ENCODE measurements at regions of chr1 and their contacts with region 1.

Region 1: DNA sequence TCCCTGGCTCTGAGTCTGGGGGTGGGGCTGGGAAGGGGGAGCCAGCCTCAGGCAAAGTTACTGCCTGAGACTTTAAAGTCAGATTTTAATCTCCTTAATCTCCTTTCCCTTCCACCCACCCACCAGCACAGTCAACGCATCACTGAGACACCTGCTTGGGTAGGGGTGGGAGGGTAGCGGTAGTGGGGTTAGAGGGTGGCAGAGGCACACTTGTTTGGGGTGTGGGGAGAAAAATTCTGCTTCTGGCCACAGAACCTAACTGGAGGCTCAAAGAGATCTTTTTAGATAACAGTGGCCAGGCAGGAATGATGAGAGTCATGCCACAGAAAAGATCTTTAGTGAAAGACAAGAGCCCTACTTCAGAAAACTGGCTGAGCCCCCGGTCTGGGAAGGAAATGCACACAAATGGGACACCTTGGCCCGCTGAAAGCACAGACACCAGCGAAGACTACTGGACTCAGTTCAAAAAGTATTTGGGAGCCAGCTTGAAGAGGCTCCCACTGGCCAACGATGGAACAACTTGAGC is 44.1 kb downstream of the CD247 start:
- DNase-seq: no peak
- H3K4me3 ChIP-seq: no peak overlapping the region
- H3K27ac ChIP-seq: no peak overlapping the region
- H3K4me1 ChIP-seq: no peaks in the 10 kb centered on the region
- H3K27me3 ChIP-seq: no peaks in the 10 kb centered on the region
- CTCF ChIP-seq: no peak
- EP300 ChIP-seq: no peak
- POLR2A ChIP-seq: no peak

Region 2: GRCh38 chr1:167387251-167387910 is 86.9 kb before region 1 on chr1:
- intact Hi-C with region 1: no loop called
- DNase-seq: no peak
- H3K4me3 ChIP-seq: no peak overlapping the region
- H3K27ac ChIP-seq: no peak overlapping the region
- H3K4me1 ChIP-seq: no peaks in the 10 kb centered on the region
- H3K27me3 ChIP-seq: no peaks in the 10 kb centered on the region
- CTCF ChIP-seq: no peak
- EP300 ChIP-seq: no peak
- POLR2A ChIP-seq: no peak

Region 3: GRCh38 chr1:167491586-167492461 is 17.6 kb after region 1 on chr1:
- intact Hi-C with region 1: loop called in 1 of 4 experiments (anchors 2 kb)
- DNase-seq: no peak
- H3K4me3 ChIP-seq: no peak overlapping the region
- H3K27ac ChIP-seq: no peak overlapping the region
- H3K4me1 ChIP-seq: no peaks in the 10 kb centered on the region
- H3K27me3 ChIP-seq: no peaks in the 10 kb centered on the region
- CTCF ChIP-seq: no peak
- EP300 ChIP-seq: no peak
- POLR2A ChIP-seq: no peak

Region 4: DNA sequence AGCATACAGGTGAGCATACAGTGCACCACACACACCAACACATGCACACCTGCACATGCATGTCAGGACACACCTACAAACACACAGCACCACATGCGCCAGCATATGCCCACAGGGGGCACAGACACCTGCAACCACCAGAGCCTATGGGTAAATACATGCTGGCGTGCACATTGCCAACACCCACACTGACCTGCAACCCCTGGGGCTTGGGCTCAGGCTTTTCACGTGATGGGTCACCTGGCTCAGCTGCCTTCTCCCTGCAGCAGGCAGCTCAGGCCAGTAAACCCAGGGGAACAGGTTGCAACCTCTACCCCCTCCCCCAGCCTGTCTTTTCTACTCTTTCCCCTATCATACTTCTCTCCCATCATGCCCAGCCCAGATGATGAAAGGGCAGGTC is 36.0 kb after region 1 on chr1:
- intact Hi-C with region 1: no loop called
- DNase-seq: no peak
- H3K4me3 ChIP-seq: no peak overlapping the region
- H3K27ac ChIP-seq: no peak overlapping the region
- H3K4me1 ChIP-seq: no peaks in the 10 kb centered on the region
- H3K27me3 ChIP-seq: no peaks in the 10 kb centered on the region
- CTCF ChIP-seq: no peak
- EP300 ChIP-seq: no peak
- POLR2A ChIP-seq: no peak

Measured in ovary (tissue), 10 donors.